CD4-positive, alpha-beta memory T cell (primary cell): ENCODE measurements at regions of chr6 and their contacts with region 1.

Region 1: DNA sequence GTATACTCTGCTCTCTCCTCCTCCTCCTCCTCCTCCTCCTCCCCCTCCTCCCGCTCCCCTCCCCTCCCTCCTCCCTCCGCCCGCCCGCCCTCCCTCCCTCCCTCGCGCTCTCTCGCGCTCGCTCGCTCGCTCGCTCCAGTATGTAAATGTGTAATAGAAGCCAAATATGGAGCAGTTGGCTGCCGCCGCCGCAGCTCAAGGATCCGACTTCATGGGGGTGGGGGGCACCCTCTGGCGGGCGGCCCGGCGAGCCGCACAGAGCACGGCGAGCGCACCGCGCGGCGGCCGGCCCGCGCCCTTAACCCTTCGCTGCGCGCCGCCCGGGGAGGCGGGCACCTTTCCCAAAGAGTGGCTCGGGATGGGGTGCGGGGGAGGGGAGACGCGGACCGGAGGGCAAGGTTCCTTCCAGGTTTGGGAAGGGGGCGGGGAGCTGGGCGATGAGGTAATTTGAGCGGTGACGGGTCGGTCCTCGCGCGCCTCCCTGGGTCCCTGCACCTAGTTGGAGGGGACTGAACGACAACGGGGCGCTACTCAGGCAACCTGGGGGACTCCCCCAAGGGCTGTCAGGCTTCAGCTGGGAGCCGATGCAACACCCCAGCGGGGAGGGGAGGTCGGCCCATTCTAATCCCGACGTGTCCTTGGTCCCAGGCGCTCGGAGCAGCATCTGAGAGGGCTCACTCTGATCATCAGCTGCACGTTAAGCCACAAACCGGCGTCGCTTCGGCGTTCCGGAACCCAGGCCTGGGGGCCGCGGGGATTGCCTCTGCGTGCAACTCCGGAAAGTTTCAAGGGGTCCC is 409 bp upstream of the ATXN1 start:
- DNase-seq: peak; percentile 87 to 96 (median 89)
- H3K4me3 ChIP-seq: peak overlapping the region; percentile 75 to 84
- H3K4me3 Mint-ChIP-seq: peak overlapping the region; percentile 91 to 100 (median 98)
- H3K27ac ChIP-seq: peak overlapping the region; percentile 99
- H3K27ac Mint-ChIP-seq: peak overlapping the region; percentile 97 to 100 (median 99)
- H3K4me1 ChIP-seq: peaks cover 57% of the 10 kb centered on the region
- H3K4me1 Mint-ChIP-seq: peaks cover 46 to 87% (median 57%) of the 10 kb centered on the region in 4 donors
- H3K27me3 ChIP-seq: no peaks in the 10 kb centered on the region
- H3K27me3 Mint-ChIP-seq: peaks cover 0 to 4% of the 10 kb centered on the region in 2 donors

Region 2: DNA sequence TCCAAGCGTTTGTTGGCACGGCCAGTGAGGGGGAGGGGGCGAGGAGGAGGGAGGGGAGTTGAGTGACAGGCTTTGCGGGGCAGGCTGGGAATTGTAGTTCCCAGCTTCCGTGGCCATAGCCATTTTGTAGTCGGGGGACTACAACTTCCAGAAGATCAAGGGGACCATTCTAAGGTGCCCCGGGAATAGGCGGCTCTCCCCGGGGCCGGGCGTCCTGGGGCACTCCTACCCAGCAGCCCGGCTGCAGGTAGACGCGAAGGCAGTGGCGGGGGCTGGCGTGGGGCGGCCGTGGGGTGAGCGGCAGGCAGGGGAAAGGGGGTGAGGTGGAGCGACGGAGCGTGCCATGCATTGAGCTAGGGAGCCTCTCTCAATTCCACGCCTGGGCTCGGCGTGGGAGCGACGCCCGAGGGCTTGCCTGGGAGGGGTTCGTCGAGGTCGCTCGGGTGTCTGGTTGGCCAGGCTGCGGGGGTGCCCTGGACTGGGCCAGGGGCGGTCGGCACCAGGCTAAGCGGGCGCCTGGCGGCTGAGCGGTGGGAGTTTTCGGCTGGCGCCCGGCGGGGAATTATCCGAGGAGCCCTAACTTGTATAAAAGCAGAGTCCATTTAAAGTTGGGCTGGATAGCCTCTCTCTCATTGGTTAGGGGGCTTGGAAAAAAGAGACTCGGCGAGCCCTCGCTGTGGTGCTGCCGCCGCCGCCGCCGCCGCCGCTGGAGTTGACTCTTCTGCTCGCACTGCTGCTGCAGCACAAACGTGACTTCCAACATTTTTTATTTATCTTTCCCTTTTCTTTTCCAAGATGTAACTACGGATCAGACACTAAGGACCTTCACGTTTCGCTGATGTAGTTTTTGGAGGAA is 1516.1 kb before region 1 on chr6 and contains the start of gene JARID2:
- CTCF ChIA-PET with region 1: no interaction called
- POLR2A ChIA-PET with region 1: no interaction called
- intact Hi-C with region 1: loop called (anchors 5 kb)
- DNase-seq: peak; percentile 94 to 98 (median 95)
- H3K4me3 ChIP-seq: peak within 1 kb of the TSS; percentile 75 to 96
- H3K4me3 Mint-ChIP-seq: peak within 1 kb of the TSS; percentile 98 to 100 (median 99)
- H3K27ac ChIP-seq: peak within 1 kb of the TSS; percentile 90
- H3K27ac Mint-ChIP-seq: peak within 1 kb of the TSS; percentile 96 to 99 (median 98)
- H3K4me1 ChIP-seq: peaks cover 32% of the 10 kb centered on the region
- H3K4me1 Mint-ChIP-seq: peaks cover 19 to 49% (median 29%) of the 10 kb centered on the region in 4 donors
- H3K27me3 ChIP-seq: no peaks in the 10 kb centered on the region
- H3K27me3 Mint-ChIP-seq: peaks cover 0 to 5% of the 10 kb centered on the region in 2 donors
- total RNA-seq, gene JARID2: 20.2 to 21.6 TPM

Region 3: GRCh38 chr6:16332175-16332542 is 429.5 kb before region 1 on chr6:
- CTCF ChIA-PET with region 1: interaction called, 49 read pairs
- POLR2A ChIA-PET with region 1: interaction called, 14 read pairs
- intact Hi-C with region 1: loop called (anchors 1 kb)
- DNase-seq: peak; percentile 77 to 86 (median 79)
- H3K4me3 ChIP-seq: no peak overlapping the region
- H3K4me3 Mint-ChIP-seq: no peak overlapping the region
- H3K27ac ChIP-seq: peak overlapping the region; percentile 50
- H3K27ac Mint-ChIP-seq: no peak overlapping the region
- H3K4me1 ChIP-seq: peaks cover 18% of the 10 kb centered on the region
- H3K4me1 Mint-ChIP-seq: peaks cover 0 to 20% (median 8%) of the 10 kb centered on the region in 4 donors
- H3K27me3 ChIP-seq: no peaks in the 10 kb centered on the region
- H3K27me3 Mint-ChIP-seq: no peaks in the 10 kb centered on the region

Region 4: GRCh38 chr6:16514249-16514648 is 247.4 kb before region 1 on chr6:
- CTCF ChIA-PET with region 1: interaction called, 107 read pairs
- POLR2A ChIA-PET with region 1: interaction called, 44 read pairs
- intact Hi-C with region 1: loop called (anchors 1 kb)
- DNase-seq: peak in 4 of 5 donors; percentile 39 to 48 (median 42)
- H3K4me3 ChIP-seq: no peak overlapping the region
- H3K4me3 Mint-ChIP-seq: peak overlapping the region in 4 of 8 donors; percentile 22 to 65 (median 34)
- H3K27ac ChIP-seq: no peak overlapping the region
- H3K27ac Mint-ChIP-seq: peak overlapping the region; percentile 49 to 95 (median 85)
- H3K4me1 ChIP-seq: peaks cover 54% of the 10 kb centered on the region
- H3K4me1 Mint-ChIP-seq: peaks cover 53 to 73% (median 65%) of the 10 kb centered on the region in 4 donors
- H3K27me3 ChIP-seq: no peaks in the 10 kb centered on the region
- H3K27me3 Mint-ChIP-seq: no peaks in the 10 kb centered on the region

Region 5: GRCh38 chr6:16698997-16699868 is 62.4 kb before region 1 on chr6:
- CTCF ChIA-PET with region 1: interaction called, 21 read pairs
- POLR2A ChIA-PET with region 1: interaction called, 70 read pairs
- intact Hi-C with region 1: loop called (anchors 2 kb)
- DNase-seq: peak in 2 of 5 donors; percentile 33 to 74
- H3K4me3 ChIP-seq: peak overlapping the region in 1 of 2 donors; percentile 61
- H3K4me3 Mint-ChIP-seq: peak overlapping the region; percentile 86 to 94 (median 92)
- H3K27ac ChIP-seq: peak overlapping the region; percentile 69
- H3K27ac Mint-ChIP-seq: peak overlapping the region; percentile 92 to 97 (median 96)
- H3K4me1 ChIP-seq: peaks cover 78% of the 10 kb centered on the region
- H3K4me1 Mint-ChIP-seq: peaks cover 58 to 83% (median 72%) of the 10 kb centered on the region in 4 donors
- H3K27me3 ChIP-seq: no peaks in the 10 kb centered on the region
- H3K27me3 Mint-ChIP-seq: no peaks in the 10 kb centered on the region

Region 6: DNA sequence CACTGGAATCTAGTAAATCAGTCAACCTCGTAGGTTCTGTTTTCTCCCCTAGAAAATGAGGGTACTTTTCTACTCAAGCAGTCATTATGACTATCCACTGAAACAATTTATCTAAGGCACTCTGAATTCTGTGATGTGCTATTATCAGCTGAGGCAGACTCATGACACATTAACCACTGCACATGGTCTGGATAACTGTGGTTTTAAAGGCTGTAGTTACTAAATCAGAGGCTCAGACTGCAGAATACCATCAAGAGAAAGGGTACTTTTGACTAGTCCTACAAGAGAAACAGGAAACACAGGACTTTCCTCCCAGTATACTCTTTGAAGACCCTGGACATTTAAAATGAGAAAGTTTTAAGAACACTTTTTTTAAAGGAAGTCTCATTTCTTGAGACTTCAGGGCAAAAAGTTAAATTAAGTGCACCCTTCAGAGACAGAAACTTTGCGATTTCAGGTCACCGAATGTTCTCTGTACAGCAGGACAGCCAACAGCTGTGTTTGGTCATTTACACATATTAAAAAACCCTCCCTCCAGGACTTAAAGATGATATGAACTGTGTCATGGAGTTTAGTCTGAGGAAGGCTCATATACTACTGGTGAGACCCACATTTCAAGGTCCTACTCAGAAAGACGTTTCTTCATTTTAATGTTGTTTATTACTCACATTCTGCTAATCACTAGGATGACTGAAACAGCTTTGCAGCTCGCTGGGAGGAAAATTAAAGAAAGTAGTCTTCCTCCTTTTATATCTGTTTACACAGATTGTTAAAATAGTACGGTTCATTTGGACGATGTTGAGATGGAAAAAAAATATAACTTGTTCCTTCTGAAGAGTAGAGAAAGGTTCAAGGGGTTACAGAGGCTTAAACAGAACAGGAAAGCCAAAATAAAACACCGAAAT is 20.3 kb before region 1 on chr6:
- CTCF ChIA-PET with region 1: interaction called, 29 read pairs
- POLR2A ChIA-PET with region 1: interaction called, 60 read pairs
- intact Hi-C with region 1: no loop called
- DNase-seq: no peak
- H3K4me3 ChIP-seq: no peak overlapping the region
- H3K4me3 Mint-ChIP-seq: peak overlapping the region in 2 of 8 donors; percentile 20 to 23
- H3K27ac ChIP-seq: no peak overlapping the region
- H3K27ac Mint-ChIP-seq: peak overlapping the region; percentile 19 to 90 (median 52)
- H3K4me1 ChIP-seq: peaks cover 72% of the 10 kb centered on the region
- H3K4me1 Mint-ChIP-seq: peaks cover 57 to 97% (median 78%) of the 10 kb centered on the region in 4 donors
- H3K27me3 ChIP-seq: no peaks in the 10 kb centered on the region
- H3K27me3 Mint-ChIP-seq: no peaks in the 10 kb centered on the region

Region 7: DNA sequence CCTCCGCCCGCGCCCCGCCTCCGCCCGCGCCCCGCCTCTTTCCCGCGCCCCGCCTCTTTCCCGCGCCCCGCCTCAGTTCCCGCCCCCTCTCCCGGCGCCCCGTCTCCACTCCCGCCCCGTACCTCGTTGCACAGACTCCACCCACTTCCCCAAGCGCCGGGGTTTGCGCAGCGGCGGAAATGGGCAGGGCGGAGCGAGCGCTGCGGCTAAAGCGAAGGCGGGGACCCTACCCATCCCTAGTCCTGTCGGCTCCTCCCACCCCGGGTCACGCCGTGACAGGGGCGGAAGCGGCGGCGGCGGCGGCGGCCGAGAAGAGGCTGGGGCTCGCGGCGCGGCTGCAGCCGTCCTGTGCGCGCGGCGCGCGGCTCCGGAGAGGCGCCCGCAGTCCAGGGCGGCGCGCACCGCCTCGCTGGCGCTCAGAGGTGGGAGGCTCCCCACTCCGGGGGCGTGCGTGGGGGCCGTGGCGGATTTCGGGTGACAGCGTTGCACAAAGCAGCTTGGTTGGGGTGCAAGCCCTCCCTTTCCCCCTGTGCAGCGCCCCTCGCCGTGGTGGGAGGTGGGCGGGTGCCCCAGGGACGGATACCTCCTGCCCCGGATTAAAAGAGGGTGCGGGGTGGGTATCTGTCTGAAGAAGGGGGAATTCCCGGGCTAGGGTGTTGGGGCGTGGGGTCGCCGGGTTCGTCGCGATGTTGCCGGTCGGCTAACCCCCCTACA is 1393.6 kb after region 1 on chr6 and contains the start of gene KDM1B:
- CTCF ChIA-PET with region 1: no interaction called
- POLR2A ChIA-PET with region 1: no interaction called
- intact Hi-C with region 1: loop called (anchors 5 kb)
- DNase-seq: peak; percentile 98 to 100 (median 99)
- H3K4me3 ChIP-seq: peak within 1 kb of the TSS; percentile 92 to 98
- H3K4me3 Mint-ChIP-seq: peak within 1 kb of the TSS; percentile 98 to 99 (median 99)
- H3K27ac ChIP-seq: peak within 1 kb of the TSS; percentile 83
- H3K27ac Mint-ChIP-seq: peak within 1 kb of the TSS; percentile 84 to 100 (median 99)
- H3K4me1 ChIP-seq: peaks cover 29% of the 10 kb centered on the region
- H3K4me1 Mint-ChIP-seq: peaks cover 17 to 36% (median 28%) of the 10 kb centered on the region in 4 donors
- H3K27me3 ChIP-seq: no peaks in the 10 kb centered on the region
- H3K27me3 Mint-ChIP-seq: no peaks in the 10 kb centered on the region
- total RNA-seq, gene KDM1B: 12.0 to 12.3 TPM